ENCODE measurements at regions of chr1 and their contacts with region 1.

Region 1: GRCh38 chr1:156677616-156678596 is 699 bp upstream of the NES start:
- DNase-seq: peak; percentile 77
- ATAC-seq: peak; percentile 2
- H3K4me3 Mint-ChIP-seq: peak overlapping the region; percentile 76
- H3K27ac Mint-ChIP-seq: peak overlapping the region; percentile 82
- H3K4me1 Mint-ChIP-seq: peaks cover 57% of the 10 kb centered on the region
- H3K27me3 Mint-ChIP-seq: peaks cover 34% of the 10 kb centered on the region
- CTCF ChIP-seq: peak; percentile 76

Region 2: GRCh38 chr1:156641761-156642264 is 36.1 kb before region 1 on chr1 and contains the start of gene BCAN:
- CTCF ChIA-PET with region 1: interaction called, 36 read pairs
- POLR2A ChIA-PET with region 1: interaction called, 7 read pairs
- DNase-seq: peak; percentile 73
- ATAC-seq: peak; percentile 70
- H3K4me3 Mint-ChIP-seq: peak within 1 kb of the TSS; percentile 70
- H3K27ac Mint-ChIP-seq: no peak within 1 kb of the TSS
- H3K4me1 Mint-ChIP-seq: peaks cover 29% of the 10 kb centered on the region
- H3K27me3 Mint-ChIP-seq: peaks cover 92% of the 10 kb centered on the region
- CTCF ChIP-seq: no peak
- total RNA-seq, gene BCAN: 2.5 to 3.7 TPM (median 3.6 TPM) in 3 replicates

Region 3: GRCh38 chr1:156652131-156652991 is 25.5 kb before region 1 on chr1:
- CTCF ChIA-PET with region 1: interaction called, 437 read pairs
- POLR2A ChIA-PET with region 1: interaction called, 3 read pairs
- DNase-seq: peak; percentile 84
- ATAC-seq: peak; percentile 58
- H3K4me3 Mint-ChIP-seq: no peak overlapping the region
- H3K27ac Mint-ChIP-seq: no peak overlapping the region
- H3K4me1 Mint-ChIP-seq: peaks cover 28% of the 10 kb centered on the region
- H3K27me3 Mint-ChIP-seq: peaks cover 95% of the 10 kb centered on the region
- CTCF ChIP-seq: no peak

Region 4: DNA sequence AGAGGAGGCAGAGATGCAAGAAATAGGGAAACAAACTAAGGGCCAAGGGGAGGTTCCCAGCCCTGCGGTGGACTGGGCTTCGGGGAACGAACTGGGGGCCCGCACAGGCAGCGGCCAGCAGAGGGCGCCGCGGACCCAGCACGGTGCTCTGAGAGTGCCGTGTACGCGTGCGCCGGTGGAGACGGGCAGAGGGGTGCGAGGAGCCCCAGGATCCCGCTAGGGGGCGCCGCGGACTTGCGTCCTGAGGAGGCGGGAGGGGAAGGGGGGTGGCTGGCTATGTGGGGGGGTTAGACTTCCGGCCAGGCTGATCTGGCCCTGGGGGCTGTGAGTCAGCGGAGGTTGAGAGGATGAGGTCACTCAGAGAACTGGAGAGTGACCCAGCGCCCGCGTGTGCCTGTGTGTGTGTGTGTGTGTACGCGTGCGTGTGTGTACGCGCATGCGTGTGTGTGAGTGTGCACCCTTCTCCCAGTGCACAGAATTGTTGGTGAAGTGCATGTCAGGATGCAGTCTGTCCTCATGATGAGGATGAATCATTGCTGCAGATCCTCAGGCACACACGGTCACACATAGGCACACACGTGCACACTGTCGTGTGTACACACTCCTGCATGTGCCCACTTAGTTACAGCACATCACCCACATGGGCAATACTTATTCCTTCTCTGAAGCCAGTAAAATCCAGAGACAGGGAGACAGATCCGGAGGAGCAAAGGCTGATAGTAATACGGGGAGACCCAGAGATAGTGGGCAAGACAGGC is 17.7 kb before region 1 on chr1:
- CTCF ChIA-PET with region 1: interaction called, 437 read pairs
- POLR2A ChIA-PET with region 1: interaction called, 150 read pairs
- DNase-seq: peak; percentile 99
- ATAC-seq: peak; percentile 63
- H3K4me3 Mint-ChIP-seq: peak overlapping the region; percentile 35; the same call in 1 of the 2 replicates
- H3K27ac Mint-ChIP-seq: peak overlapping the region; percentile 99
- H3K4me1 Mint-ChIP-seq: peaks cover 83% of the 10 kb centered on the region
- H3K27me3 Mint-ChIP-seq: peaks cover 47% of the 10 kb centered on the region
- CTCF ChIP-seq: peak; percentile 95

Region 5: GRCh38 chr1:156667610-156667967 is 10.3 kb before region 1 on chr1:
- CTCF ChIA-PET with region 1: interaction called, 437 read pairs
- POLR2A ChIA-PET with region 1: interaction called, 150 read pairs
- DNase-seq: no peak
- ATAC-seq: no peak
- H3K4me3 Mint-ChIP-seq: no peak overlapping the region
- H3K27ac Mint-ChIP-seq: peak overlapping the region; percentile 76
- H3K4me1 Mint-ChIP-seq: peaks cover 88% of the 10 kb centered on the region
- H3K27me3 Mint-ChIP-seq: peaks cover 4% of the 10 kb centered on the region; the same call in 1 of the 2 replicates
- CTCF ChIP-seq: no peak

Region 6: GRCh38 chr1:156705918-156706656 is 28.2 kb after region 1 on chr1:
- CTCF ChIA-PET with region 1: interaction called, 1,553 read pairs
- POLR2A ChIA-PET with region 1: interaction called, 47 read pairs
- DNase-seq: peak; percentile 94
- ATAC-seq: peak; percentile 45
- H3K4me3 Mint-ChIP-seq: peak overlapping the region; percentile 84
- H3K27ac Mint-ChIP-seq: peak overlapping the region; percentile 96
- H3K4me1 Mint-ChIP-seq: peaks cover 62% of the 10 kb centered on the region
- H3K27me3 Mint-ChIP-seq: peaks cover 23% of the 10 kb centered on the region
- CTCF ChIP-seq: peak; percentile 96